HCT116 (cell line): ENCODE measurements at regions of chr5 and their contacts with region 1.

Region 1: DNA sequence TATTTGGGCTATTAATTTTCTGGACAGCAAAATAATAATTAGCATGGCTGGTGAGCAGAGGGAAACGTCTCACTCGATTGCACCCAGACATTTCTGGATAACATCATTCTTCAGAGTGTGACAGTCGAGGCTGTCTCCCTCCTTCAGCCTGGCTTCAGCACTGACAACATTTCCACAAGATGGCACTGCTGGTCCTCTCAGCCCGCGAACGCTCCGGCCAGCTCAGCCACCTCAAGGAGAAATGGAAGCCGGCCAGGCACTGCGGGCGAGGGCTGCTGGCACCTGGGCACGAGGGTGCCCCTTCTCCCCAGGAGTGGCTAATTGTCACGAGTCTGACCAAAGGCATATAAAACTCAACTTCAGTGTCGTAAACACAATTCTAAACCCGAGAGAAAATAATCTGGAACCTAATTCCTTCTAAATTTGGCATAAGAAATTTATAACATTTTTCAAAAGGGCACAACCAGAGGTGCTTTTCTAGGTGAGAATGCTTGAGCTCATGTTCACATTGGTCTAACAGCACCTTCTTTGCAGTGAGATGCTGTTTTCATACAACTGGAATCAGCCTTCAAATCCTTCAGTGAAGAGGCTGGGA is 65.9 kb downstream of the DAP start:
- DNase-seq: no peak
- ATAC-seq: peak; percentile 97
- H3K4me3 ChIP-seq: no peak overlapping the region
- H3K27ac ChIP-seq: no peak overlapping the region
- H3K4me1 ChIP-seq: peaks cover 5 to 19% of the 10 kb centered on the region in 2 experiments; a peak in 3 of 4 replicates
- H3K27me3 ChIP-seq: no peaks in the 10 kb centered on the region
- CTCF ChIP-seq: peak; percentile 66 to 83 (median 80); a peak in 5 of 6 replicates
- POLR2A ChIP-seq: no peak
- RAD21 ChIP-seq: peak; percentile 93

Region 2: DNA sequence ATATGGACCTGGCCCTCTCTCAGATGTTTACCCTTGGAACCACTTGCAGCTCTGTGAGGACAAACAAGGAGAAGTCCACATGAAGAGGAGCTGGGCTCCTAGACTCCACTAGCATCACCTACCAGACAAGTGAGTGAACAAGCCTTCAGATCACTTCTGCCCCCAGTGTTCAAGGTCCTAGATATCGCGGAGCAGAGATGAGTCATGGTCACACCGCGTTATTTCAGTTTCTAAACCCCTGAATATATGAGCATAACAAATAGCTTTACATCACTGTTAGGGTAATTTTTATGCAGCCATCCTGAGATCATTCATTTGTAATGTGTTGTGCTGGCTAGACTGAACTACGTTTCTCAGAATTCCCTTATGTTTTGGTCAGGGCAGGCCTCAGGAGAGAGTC is 142.9 kb after region 1 on chr5:
- CTCF ChIA-PET with region 1: no interaction called
- POLR2A ChIA-PET with region 1: no interaction called
- RAD21 ChIA-PET with region 1: no interaction called
- intact Hi-C with region 1: no loop called
- DNase-seq: no peak
- ATAC-seq: no peak
- H3K4me3 ChIP-seq: no peak overlapping the region
- H3K27ac ChIP-seq: no peak overlapping the region
- H3K4me1 ChIP-seq: no peaks in the 10 kb centered on the region
- H3K27me3 ChIP-seq: no peaks in the 10 kb centered on the region
- CTCF ChIP-seq: no peak
- POLR2A ChIP-seq: no peak
- RAD21 ChIP-seq: no peak

Region 3: GRCh38 chr5:10863763-10864383 is 168.7 kb after region 1 on chr5:
- CTCF ChIA-PET with region 1: no interaction called
- POLR2A ChIA-PET with region 1: no interaction called
- RAD21 ChIA-PET with region 1: no interaction called
- intact Hi-C with region 1: loop called (anchors 5 kb)
- DNase-seq: peak; percentile 45
- ATAC-seq: peak; percentile 98
- H3K4me3 ChIP-seq: no peak overlapping the region
- H3K27ac ChIP-seq: no peak overlapping the region
- H3K4me1 ChIP-seq: no peaks in the 10 kb centered on the region
- H3K27me3 ChIP-seq: peaks cover 34% of the 10 kb centered on the region
- CTCF ChIP-seq: peak; percentile 31 to 95 (median 92); a peak in 5 of 6 replicates
- POLR2A ChIP-seq: no peak
- RAD21 ChIP-seq: peak; percentile 55

Region 4: GRCh38 chr5:10987930-10988504 is 292.9 kb after region 1 on chr5:
- CTCF ChIA-PET with region 1: interaction called, 4 read pairs
- POLR2A ChIA-PET with region 1: no interaction called
- RAD21 ChIA-PET with region 1: no interaction called
- intact Hi-C with region 1: loop called (anchors 2 kb)
- DNase-seq: peak; percentile 42
- ATAC-seq: peak; percentile 99
- H3K4me3 ChIP-seq: no peak overlapping the region
- H3K27ac ChIP-seq: no peak overlapping the region
- H3K4me1 ChIP-seq: no peaks in the 10 kb centered on the region
- H3K27me3 ChIP-seq: peaks cover 31% of the 10 kb centered on the region; the same call in 1 of the 2 replicates
- CTCF ChIP-seq: peak; percentile 68 to 95 (median 91)
- POLR2A ChIP-seq: no peak
- RAD21 ChIP-seq: peak; percentile 65

Region 5: DNA sequence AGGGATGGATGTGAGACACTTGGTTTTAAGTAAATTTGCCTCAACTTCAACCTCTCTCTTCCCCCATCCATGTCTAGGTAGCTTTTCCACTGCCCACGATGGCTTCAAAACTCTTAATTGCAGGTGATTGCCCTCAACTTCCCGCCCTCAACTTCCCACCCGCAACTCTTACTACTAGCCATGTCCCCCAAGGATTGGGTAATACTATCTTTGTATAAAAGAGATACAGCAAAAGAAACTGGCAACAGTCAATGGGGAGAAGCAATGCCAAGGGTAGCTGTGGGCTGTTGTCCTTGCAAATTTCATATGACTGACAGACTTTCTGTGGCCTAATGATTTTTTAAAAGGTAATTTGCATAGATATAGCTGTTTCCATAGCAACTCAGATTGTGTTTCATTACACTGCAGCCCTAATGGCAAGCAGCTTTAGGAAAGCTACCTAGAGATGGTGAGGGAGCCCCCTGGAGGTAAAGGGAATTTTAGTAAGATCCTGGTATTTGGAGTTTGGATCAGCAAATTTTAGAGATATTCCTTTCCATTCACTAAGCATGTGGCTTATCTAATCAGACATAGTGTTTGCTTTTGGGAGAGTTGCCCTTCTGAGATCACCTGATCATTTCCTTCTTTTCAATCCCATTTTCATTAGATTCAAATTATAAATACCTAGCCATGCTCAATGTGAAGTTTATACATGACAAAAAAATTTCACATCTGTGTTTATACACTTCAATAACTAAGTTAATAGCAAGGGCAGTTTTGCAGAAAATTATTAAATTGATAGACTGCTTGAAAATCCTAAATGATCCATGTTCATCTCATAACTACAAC is 487.5 kb after region 1 on chr5:
- CTCF ChIA-PET with region 1: no interaction called
- POLR2A ChIA-PET with region 1: no interaction called
- RAD21 ChIA-PET with region 1: no interaction called
- intact Hi-C with region 1: loop called (anchors 5 kb)
- DNase-seq: peak; percentile 18
- ATAC-seq: peak; percentile 47; the same call in 1 of the 2 replicates
- H3K4me3 ChIP-seq: no peak overlapping the region
- H3K27ac ChIP-seq: no peak overlapping the region
- H3K4me1 ChIP-seq: no peaks in the 10 kb centered on the region
- H3K27me3 ChIP-seq: 0 out of 2 replicates have a peak, but pooled peaks cover 4% of the 10 kb centered on the region
- CTCF ChIP-seq: peak; percentile 26 to 64 (median 57); a peak in 5 of 6 replicates
- POLR2A ChIP-seq: no peak
- RAD21 ChIP-seq: peak; percentile 47

Region 6: DNA sequence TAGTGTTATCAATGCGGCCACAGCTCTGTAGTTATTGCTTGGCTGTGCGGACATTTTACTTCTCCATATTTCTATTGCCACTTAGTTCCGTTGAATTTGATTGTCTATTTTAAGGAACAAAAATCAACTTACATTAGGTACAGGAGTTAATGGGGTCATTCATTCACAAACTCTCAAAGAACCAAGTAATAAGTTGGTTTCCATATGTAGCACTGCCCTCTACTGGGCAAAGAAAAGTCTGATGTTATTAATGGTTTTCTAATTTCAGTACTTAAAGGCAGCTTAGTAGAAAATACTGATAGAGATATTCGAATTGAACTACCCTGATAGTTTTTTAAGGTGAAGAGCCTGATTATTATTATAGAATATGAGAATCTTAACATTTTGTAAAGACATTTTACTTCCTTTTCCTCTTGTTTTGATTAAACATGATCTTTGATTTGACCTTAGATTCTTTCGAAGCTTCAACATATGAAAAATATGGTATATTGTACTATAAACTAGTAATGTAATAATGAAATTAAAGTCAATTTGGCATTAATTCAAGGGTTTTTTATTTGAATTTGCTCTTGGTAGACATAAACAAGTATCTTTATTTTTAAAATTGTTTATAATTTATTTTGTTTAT is 1328.6 kb after region 1 on chr5:
- CTCF ChIA-PET with region 1: no interaction called
- POLR2A ChIA-PET with region 1: no interaction called
- RAD21 ChIA-PET with region 1: no interaction called
- intact Hi-C with region 1: loop called (anchors 5 kb)
- DNase-seq: no peak
- ATAC-seq: no peak
- H3K4me3 ChIP-seq: no peak overlapping the region
- H3K27ac ChIP-seq: no peak overlapping the region
- H3K4me1 ChIP-seq: no peaks in the 10 kb centered on the region
- H3K27me3 ChIP-seq: no peaks in the 10 kb centered on the region
- CTCF ChIP-seq: peak; percentile 7 to 64 (median 45); a peak in 4 of 6 replicates
- POLR2A ChIP-seq: no peak
- RAD21 ChIP-seq: peak; percentile 23; the same call in 1 of the 2 replicates